Activated CD4-positive, alpha-beta T cell treated with anti-CD3 and anti-CD28 coated beads, Interleukin-2, amount 10 ng/mL, durations not matched to agents 24 days and 14 days (primary cell): ENCODE measurements at regions of chr16 and their contacts with region 1.

Region 1: DNA sequence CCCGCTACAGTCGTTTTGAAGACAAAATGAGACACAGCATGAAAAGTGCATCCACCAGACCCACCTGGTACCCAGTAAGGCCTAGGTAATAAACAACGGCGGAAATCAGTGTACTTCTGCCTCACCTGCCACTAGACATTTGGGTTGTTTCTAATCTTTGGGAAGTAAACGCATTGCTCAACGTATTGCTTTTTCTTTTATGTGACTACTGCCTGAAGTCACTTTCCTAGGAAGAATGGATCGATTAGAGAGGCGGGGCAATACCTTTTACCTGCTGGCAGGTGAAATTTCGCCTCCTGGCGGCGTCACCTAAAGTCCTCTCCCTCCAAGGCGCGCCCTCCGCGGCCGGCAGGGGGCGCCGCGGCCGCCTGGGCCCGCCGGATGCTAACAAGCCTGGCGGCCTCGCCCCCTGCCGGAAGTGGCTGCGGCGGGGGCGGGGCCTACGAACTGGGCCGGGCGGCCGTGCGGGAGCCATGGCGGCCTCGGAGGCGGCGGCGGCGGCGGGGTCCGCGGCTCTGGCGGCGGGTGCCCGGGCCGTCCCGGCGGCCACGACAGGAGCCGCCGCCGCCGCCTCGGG is at the start of gene ATMIN:
- DNase-seq: peak; percentile 97
- H3K4me3 Mint-ChIP-seq: peak within 1 kb of the TSS; percentile 88
- H3K27ac Mint-ChIP-seq: peak within 1 kb of the TSS; percentile 69
- H3K4me1 Mint-ChIP-seq: peaks cover 20% of the 10 kb centered on the region
- H3K27me3 Mint-ChIP-seq: no peaks in the 10 kb centered on the region
- total RNA-seq, gene ATMIN: 31.1 and 33.5 TPM in 2 replicates

Region 2: DNA sequence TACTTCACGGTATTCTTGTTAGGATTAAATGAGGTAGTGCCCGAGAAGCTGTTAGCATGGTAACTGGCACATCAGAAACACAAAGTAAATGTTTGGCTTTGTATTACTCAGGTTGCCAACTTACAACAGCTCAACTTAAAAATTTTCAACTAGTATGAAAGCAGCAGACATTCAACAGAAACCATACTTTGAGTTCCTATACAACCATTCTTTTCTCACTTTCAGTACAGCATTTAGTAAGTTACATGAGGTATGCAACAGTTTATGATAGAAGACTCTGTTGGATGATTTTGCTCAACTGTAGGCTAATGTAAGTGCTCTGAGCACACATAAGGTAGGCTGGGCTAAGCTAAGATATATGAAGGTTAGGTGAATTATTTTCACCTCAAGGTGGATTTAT is 20.8 kb before region 1 on chr16:
- intact Hi-C with region 1: no loop called
- DNase-seq: no peak
- H3K4me3 Mint-ChIP-seq: no peak overlapping the region
- H3K27ac Mint-ChIP-seq: no peak overlapping the region
- H3K4me1 Mint-ChIP-seq: peaks cover 14% of the 10 kb centered on the region
- H3K27me3 Mint-ChIP-seq: no peaks in the 10 kb centered on the region

Region 3: DNA sequence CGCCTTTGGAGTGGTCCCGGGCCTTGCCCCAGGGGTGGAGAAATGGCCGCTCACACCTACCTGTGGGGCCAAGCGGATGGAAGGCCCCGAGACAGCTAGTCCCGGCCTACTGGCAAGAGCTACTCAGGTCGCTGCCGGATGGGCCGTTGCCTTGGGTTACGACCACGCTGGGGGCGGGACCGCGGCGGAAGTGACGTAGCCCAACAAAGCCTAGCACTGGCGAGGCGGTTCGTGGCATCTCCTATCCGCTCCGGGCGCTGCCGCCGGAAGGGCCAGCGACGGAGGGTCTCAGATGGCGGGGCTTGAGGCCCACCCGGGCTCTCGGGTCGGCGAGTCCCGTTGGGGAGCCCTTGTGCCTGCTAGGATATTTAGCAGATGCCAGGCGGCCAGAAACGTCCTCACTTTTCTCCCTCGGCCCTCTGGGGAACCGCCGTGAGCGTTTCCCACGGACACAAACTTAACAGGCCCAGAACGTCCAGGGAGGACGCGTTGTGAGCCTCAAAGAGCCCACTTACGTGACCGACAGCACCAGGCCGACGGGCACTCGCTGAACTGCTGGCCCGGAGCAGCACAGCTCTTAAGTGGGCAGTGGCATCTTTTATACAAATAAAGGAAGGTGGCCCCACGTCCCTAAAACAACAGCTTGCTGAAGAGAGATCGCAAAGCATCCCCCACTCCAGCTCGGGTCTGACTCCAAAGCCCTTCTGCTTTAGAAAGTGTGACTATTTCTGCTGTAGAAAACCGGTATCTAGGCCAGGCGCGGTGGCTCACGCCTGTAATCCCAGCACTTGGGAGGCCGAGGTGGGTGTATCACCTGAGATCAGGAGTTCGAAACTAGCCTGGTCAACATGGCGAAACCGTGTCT is 41.8 kb after region 1 on chr16 and contains the start of gene C16orf46:
- intact Hi-C with region 1: loop called (anchors 1 kb)
- DNase-seq: peak; percentile 99
- H3K4me3 Mint-ChIP-seq: no peak within 1 kb of the TSS
- H3K27ac Mint-ChIP-seq: no peak within 1 kb of the TSS
- H3K4me1 Mint-ChIP-seq: no peaks in the 10 kb centered on the region
- H3K27me3 Mint-ChIP-seq: peaks cover 4% of the 10 kb centered on the region
- total RNA-seq, gene C16orf46: 0.54 and 0.86 TPM in 2 replicates

Region 4: DNA sequence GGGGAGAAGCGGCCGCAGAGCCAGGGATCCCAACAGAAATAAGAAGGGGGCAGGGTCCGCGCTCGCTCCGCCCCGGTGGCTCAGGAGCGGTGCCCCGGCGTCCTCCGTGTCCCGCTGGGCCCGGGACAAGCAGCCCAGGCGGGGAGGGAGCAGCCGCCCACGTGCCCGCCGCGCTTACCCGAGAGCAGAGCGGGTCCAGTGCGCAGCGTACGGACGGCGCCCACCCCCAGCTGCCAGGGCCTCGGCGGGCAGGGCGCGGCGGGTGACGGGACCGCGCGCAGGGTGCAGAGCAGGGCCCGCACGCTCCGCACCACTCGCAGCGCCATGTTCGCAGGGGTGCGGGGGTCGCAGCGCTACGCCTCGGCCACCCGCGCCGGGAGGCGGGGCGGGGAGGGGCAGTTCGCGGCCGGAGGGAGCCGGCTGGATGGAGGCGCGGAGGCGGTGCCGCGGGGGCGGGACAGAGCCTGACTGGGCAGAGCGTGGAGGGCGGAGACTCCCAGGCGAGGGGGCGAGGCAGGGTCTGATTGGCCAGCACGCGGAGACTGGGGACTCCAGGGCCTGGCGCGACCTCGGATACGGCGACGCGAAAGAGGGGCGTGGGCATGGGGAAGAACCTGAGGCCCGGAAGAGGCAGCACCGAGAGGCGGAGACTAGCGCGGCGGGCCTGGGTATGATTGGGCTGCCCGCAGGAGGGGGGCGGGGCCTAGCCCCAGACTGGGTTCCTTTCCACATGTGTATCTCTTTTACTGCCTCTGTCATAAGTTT is 60.6 kb after region 1 on chr16 and contains the start of gene GCSH:
- intact Hi-C with region 1: loop called (anchors 1 kb)
- DNase-seq: peak; percentile 100
- H3K4me3 Mint-ChIP-seq: peak within 1 kb of the TSS; percentile 85
- H3K27ac Mint-ChIP-seq: peak within 1 kb of the TSS; percentile 38
- H3K4me1 Mint-ChIP-seq: peaks cover 5% of the 10 kb centered on the region
- H3K27me3 Mint-ChIP-seq: no peaks in the 10 kb centered on the region
- total RNA-seq, gene GCSH: 20.8 and 22.9 TPM in 2 replicates